ENCODE measurements at regions of chr19 and their contacts with region 1.

Region 1: GRCh38 chr19:7293795-7294570 is at the start of gene INSR:
- DNase-seq: peak; percentile 74 to 93 (median 83)
- H3K4me3 ChIP-seq: peak within 1 kb of the TSS; percentile 72 to 100 (median 92)
- H3K27ac ChIP-seq: peak within 1 kb of the TSS; percentile 20 to 99 (median 92)
- H3K27me3 ChIP-seq: no peaks in the 10 kb centered on the region
- CTCF ChIP-seq: no peak
- total RNA-seq, gene INSR: 37.5 to 83.8 (median 56.2) TPM

Region 2: GRCh38 chr19:7098701-7099596 is 195.0 kb before region 1 on chr19:
- intact Hi-C with region 1: loop called (anchors 5 kb)
- DNase-seq: peak; percentile 78 to 90 (median 86)
- H3K4me3 ChIP-seq: peak overlapping the region; percentile 51 to 93 (median 72)
- H3K27ac ChIP-seq: peak overlapping the region; percentile 82 to 99 (median 96)
- H3K27me3 ChIP-seq: no peaks in the 10 kb centered on the region
- CTCF ChIP-seq: peak in 15 of 56 donors; percentile 4 to 50 (median 20)

Region 3: DNA sequence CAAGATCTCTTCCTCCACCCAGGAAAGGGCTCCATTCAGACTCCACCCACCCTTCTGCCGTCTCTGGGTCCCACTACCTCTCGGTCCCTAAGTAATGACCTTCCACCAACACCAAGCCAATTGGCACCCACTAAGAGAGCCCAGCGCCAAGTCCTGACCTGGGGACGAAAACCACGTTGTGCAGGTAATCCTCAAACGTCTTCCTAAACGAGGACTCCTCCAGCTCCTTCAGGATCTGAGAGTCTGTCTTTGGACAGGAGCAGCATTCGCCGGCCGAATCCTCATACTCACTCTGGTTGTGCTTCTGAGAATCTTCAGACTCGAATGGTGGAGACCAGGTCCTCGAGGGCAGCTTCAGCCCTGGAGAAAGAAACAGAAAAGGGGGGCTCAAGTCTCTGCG is 141.4 kb before region 1 on chr19:
- intact Hi-C with region 1: loop called (anchors 1 to 2 kb)
- DNase-seq: no peak
- H3K4me3 ChIP-seq: no peak overlapping the region
- H3K27ac ChIP-seq: no peak overlapping the region
- H3K27me3 ChIP-seq: no peaks in the 10 kb centered on the region
- CTCF ChIP-seq: no peak

Region 4: GRCh38 chr19:7224209-7224686 is 69.7 kb before region 1 on chr19:
- intact Hi-C with region 1: loop called in 1 of 2 experiments (anchors 5 kb)
- DNase-seq: peak in 5 of 10 donors; percentile 15 to 46 (median 35)
- H3K4me3 ChIP-seq: peak overlapping the region in 37 of 59 donors; percentile 3 to 54 (median 27)
- H3K27ac ChIP-seq: peak overlapping the region in 49 of 59 donors; percentile 7 to 85 (median 64)
- H3K27me3 ChIP-seq: no peaks in the 10 kb centered on the region
- CTCF ChIP-seq: no peak

Region 5: DNA sequence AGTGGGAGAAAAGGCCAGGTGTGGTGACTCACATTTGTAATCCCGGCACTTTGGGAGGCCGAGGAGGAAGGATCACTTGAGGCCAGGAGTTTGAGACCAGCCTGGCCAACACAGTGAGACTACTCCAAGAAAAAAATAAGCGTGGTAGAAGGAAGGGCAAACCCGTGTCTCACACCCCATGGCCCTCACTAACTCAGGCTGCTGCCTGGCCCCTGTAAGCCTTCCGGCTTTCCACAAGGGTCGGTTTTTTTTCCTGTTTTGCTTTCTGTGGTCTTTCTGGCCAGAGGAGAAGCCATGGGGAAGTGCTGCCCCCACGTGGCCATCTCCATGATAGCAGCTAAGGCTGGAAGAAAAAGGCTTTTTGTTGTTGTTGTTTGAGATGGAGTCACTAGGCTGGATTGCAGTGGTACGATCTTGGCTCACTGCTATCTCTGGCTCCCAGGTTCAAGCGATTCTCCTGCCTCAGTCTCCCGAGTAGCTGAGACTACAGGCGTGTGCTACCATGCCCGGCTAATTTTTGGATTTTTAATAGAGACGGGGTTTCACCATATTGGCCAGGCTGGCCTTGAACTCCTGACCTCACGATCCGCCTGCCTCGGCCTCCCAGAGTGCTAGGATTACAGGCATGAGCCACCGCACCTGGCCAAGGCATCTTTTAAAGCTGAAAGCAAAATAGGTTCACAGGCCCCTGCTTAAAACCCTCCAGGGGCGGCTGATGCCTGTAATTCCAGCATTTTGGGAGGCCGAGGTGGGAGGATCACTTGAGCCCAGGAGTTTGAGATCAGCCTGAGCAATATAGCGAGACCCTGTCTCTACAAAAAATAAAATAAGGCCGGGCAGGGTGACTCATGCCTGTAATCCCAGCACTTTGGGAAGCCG is 47.2 kb after region 1 on chr19:
- intact Hi-C with region 1: loop called in 1 of 2 experiments (anchors 5 kb)
- DNase-seq: peak; percentile 62 to 93 (median 84)
- H3K4me3 ChIP-seq: peak overlapping the region in 15 of 59 donors; percentile 1 to 34 (median 24)
- H3K27ac ChIP-seq: peak overlapping the region in 19 of 59 donors; percentile 9 to 64 (median 53)
- H3K27me3 ChIP-seq: no peaks in the 10 kb centered on the region
- CTCF ChIP-seq: peak; percentile 85 to 99 (median 95)